ENCODE measurements at regions of chr11 and their contacts with region 1.

Region 1: GRCh38 chr11:47750725-47751124 is 16.4 kb downstream of the FNBP4 start:
- DNase-seq: no peak
- ATAC-seq: no peak
- H3K4me3 Mint-ChIP-seq: no peak overlapping the region
- H3K27ac Mint-ChIP-seq: peak overlapping the region; percentile 4
- H3K4me1 Mint-ChIP-seq: peaks cover 6% of the 10 kb centered on the region
- H3K27me3 Mint-ChIP-seq: no peaks in the 10 kb centered on the region

Region 2: GRCh38 chr11:46786110-46786509 is 964.6 kb before region 1 on chr11:
- CTCF ChIA-PET with region 1: no interaction called
- POLR2A ChIA-PET with region 1: no interaction called
- intact Hi-C with region 1: loop called in 1 of 2 experiments (anchors 10 kb)
- DNase-seq: no peak
- ATAC-seq: no peak
- H3K4me3 Mint-ChIP-seq: no peak overlapping the region
- H3K27ac Mint-ChIP-seq: no peak overlapping the region
- H3K4me1 Mint-ChIP-seq: no peaks in the 10 kb centered on the region
- H3K27me3 Mint-ChIP-seq: no peaks in the 10 kb centered on the region

Region 3: GRCh38 chr11:47667135-47667534 is 83.6 kb before region 1 on chr11:
- CTCF ChIA-PET with region 1: no interaction called
- POLR2A ChIA-PET with region 1: no interaction called
- intact Hi-C with region 1: no loop called
- DNase-seq: no peak
- ATAC-seq: no peak
- H3K4me3 Mint-ChIP-seq: no peak overlapping the region
- H3K27ac Mint-ChIP-seq: no peak overlapping the region
- H3K4me1 Mint-ChIP-seq: peaks cover 27% of the 10 kb centered on the region
- H3K27me3 Mint-ChIP-seq: no peaks in the 10 kb centered on the region

Measured in activated CD4-positive, alpha-beta T cell treated with anti-CD3 and anti-CD28 coated beads for 36 hours (primary cell).